ENCODE measurements at regions of chr2 and their contacts with region 1.

Region 1: GRCh38 chr2:167733747-167734146 is 513.6 kb downstream of the STK39 start:
- DNase-seq: no peak
- ATAC-seq: no peak
- H3K4me3 ChIP-seq: no peak overlapping the region
- H3K4me3 Mint-ChIP-seq: no peak overlapping the region
- H3K27ac ChIP-seq: no peak overlapping the region
- H3K27ac Mint-ChIP-seq: no peak overlapping the region
- H3K4me1 ChIP-seq: no peaks in the 10 kb centered on the region
- H3K4me1 Mint-ChIP-seq: no peaks in the 10 kb centered on the region
- H3K27me3 ChIP-seq: no peaks in the 10 kb centered on the region
- H3K27me3 Mint-ChIP-seq: no peaks in the 10 kb centered on the region
- CTCF ChIP-seq: no peak

Region 2: GRCh38 chr2:166591226-166591625 is 1142.5 kb before region 1 on chr2:
- CTCF ChIA-PET with region 1: no interaction called
- POLR2A ChIA-PET with region 1: no interaction called
- intact Hi-C with region 1: no loop called
- DNase-seq: no peak
- ATAC-seq: no peak
- H3K4me3 ChIP-seq: no peak overlapping the region
- H3K4me3 Mint-ChIP-seq: no peak overlapping the region
- H3K27ac ChIP-seq: no peak overlapping the region
- H3K27ac Mint-ChIP-seq: no peak overlapping the region
- H3K4me1 ChIP-seq: no peaks in the 10 kb centered on the region
- H3K4me1 Mint-ChIP-seq: no peaks in the 10 kb centered on the region
- H3K27me3 ChIP-seq: no peaks in the 10 kb centered on the region
- H3K27me3 Mint-ChIP-seq: no peaks in the 10 kb centered on the region
- CTCF ChIP-seq: no peak

Region 3: GRCh38 chr2:166627893-166628292 is 1105.9 kb before region 1 on chr2:
- CTCF ChIA-PET with region 1: no interaction called
- POLR2A ChIA-PET with region 1: no interaction called
- intact Hi-C with region 1: loop called in 1 of 2 experiments (anchors 5 kb)
- DNase-seq: no peak
- ATAC-seq: no peak
- H3K4me3 ChIP-seq: no peak overlapping the region
- H3K4me3 Mint-ChIP-seq: no peak overlapping the region
- H3K27ac ChIP-seq: no peak overlapping the region
- H3K27ac Mint-ChIP-seq: no peak overlapping the region
- H3K4me1 ChIP-seq: no peaks in the 10 kb centered on the region
- H3K4me1 Mint-ChIP-seq: no peaks in the 10 kb centered on the region
- H3K27me3 ChIP-seq: no peaks in the 10 kb centered on the region
- H3K27me3 Mint-ChIP-seq: no peaks in the 10 kb centered on the region
- CTCF ChIP-seq: no peak

Region 4: DNA sequence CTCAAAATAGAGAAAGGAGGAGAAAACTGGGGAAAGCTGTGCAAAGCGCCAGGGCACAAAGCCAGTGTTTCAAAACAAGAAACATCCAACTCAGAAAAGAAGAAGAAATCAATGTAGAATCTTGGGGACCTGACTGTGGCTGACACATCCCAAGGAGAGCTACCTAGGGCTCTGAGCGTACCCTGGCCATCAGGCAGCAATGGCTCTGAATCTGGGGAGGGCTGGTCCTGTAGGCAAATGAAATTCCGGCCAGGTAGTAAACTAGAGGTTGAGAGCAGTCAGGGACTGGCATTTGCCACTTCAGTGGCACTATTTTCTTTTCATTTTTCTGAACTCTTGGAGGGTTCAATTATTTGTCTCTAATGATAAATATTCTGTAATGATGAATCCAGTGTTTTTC is 12.2 kb before region 1 on chr2:
- CTCF ChIA-PET with region 1: no interaction called
- POLR2A ChIA-PET with region 1: no interaction called
- intact Hi-C with region 1: no loop called
- DNase-seq: no peak
- ATAC-seq: no peak
- H3K4me3 ChIP-seq: no peak overlapping the region
- H3K4me3 Mint-ChIP-seq: no peak overlapping the region
- H3K27ac ChIP-seq: no peak overlapping the region
- H3K27ac Mint-ChIP-seq: no peak overlapping the region
- H3K4me1 ChIP-seq: no peaks in the 10 kb centered on the region
- H3K4me1 Mint-ChIP-seq: no peaks in the 10 kb centered on the region
- H3K27me3 ChIP-seq: no peaks in the 10 kb centered on the region
- H3K27me3 Mint-ChIP-seq: no peaks in the 10 kb centered on the region
- CTCF ChIP-seq: no peak